ENCODE measurements at regions of chr19 and their contacts with region 1.

Region 1: GRCh38 chr19:1935484-1936208 is 5.3 kb upstream of the CSNK1G2 start:
- DNase-seq: no peak
- CTCF ChIP-seq: no peak

Region 2: DNA sequence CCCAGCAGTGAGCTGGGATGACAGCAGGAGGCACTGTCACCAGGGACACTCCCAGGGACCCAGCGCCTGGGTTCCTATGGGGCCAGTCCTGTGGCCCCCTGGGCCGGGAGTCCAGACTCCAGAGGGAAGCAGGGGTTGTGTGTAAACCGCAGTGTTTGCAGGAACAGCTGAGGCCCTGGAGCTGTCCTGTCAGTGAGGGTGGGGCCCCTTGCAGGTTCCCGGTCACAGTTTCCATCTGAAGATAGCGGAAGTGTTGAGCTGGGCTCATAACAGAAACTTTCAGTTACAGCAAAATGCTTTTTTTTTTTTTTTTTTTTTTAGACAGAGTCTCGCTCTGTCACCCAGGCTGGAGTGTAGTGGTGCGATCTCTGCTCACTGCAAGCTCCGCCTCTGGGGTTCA is 12.3 kb before region 1 on chr19:
- CTCF ChIA-PET with region 1: interaction called, 14 read pairs
- POLR2A ChIA-PET with region 1: no interaction called
- DNase-seq: peak; percentile 48
- CTCF ChIP-seq: no peak

Measured in GM10248 (cell line).